Activated B cell treated with CpG ODN at 0.5 μM for 24 hours (primary cell): ENCODE measurements at regions of chr5 and their contacts with region 1.

Region 1: DNA sequence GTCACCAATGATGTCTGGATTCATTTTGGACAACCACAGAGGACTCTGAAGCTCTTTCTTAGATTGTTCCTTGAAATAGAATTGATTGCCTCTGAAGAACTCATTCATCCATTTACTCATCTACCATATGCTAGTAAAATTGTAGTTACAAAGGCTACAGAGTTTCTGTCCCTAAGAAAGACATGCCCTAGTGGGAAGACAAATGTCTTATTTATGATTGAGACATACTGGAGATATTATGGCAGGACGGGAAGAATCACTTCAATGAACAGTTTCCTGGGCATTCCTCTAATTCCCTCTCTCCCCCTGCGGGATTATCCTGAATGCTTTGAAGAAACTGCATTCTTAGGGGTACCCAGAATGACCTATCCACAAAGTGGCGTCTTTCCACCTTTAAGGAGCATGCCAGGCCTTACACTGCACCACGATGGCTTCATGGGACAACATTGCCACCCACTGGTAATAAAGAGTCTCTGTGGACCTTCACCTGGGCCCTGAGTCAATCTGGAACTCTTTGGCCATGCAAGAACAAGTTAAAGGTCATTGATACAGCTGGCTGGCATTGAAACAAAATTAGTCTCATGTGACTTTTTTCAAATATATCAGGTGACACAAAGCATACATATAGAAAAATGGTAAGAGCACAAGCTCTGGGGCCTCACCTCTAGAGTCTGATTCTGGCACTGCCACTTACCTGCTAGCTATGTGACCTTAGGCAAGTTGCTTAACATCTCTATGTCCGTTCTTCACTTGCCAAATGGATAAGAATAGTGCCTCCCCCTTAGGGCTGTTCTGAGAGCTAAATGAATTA is 32.1 kb downstream of the ANKRD55 start:
- DNase-seq: no peak
- ATAC-seq: peak; percentile 100
- H3K4me3 Mint-ChIP-seq: no peak overlapping the region
- H3K27ac Mint-ChIP-seq: no peak overlapping the region
- H3K4me1 Mint-ChIP-seq: peaks cover 4% of the 10 kb centered on the region
- H3K27me3 Mint-ChIP-seq: no peaks in the 10 kb centered on the region
- CTCF ChIP-seq: no peak

Region 2: DNA sequence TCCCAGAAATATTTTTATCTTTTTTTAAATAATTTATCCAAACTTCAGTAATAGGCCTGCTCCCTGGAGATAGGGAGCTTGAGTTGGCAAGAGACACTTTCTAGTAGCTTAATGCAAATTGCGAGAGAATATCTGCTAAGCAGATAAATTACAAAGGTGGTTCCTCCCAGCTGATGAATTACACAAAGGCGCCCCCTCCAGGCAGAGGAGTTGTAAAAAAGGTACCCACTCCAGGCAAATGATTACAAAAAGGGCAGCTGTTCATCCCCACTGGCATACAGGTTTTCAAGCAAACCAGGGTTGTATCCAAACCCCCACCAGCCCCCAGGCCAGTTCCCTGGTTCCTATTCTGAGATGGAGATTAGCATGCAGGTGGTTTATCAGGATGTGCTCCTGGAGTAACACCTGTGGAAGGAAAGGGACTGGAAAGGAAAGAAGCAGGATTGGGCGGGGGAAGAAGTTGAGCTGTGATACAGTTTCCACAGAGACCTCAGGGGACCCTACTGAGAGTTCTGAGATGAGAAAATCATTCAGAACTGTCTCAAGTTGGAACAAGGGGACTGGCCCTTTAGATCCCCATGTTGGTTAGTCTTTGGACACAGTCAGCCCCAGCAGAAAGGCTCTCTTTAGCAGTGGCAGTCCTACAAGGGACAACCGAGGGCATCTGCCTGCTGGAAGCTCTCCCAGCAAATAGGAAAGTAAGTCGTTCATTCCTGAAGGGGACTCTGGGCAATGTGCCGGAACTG is 1241.2 kb before region 1 on chr5:
- CTCF ChIA-PET with region 1: no interaction called
- POLR2A ChIA-PET with region 1: no interaction called
- intact Hi-C with region 1: no loop called
- DNase-seq: no peak
- ATAC-seq: no peak
- H3K4me3 Mint-ChIP-seq: no peak overlapping the region
- H3K27ac Mint-ChIP-seq: no peak overlapping the region
- H3K4me1 Mint-ChIP-seq: no peaks in the 10 kb centered on the region
- H3K27me3 Mint-ChIP-seq: peaks cover 28% of the 10 kb centered on the region
- CTCF ChIP-seq: no peak

Region 3: DNA sequence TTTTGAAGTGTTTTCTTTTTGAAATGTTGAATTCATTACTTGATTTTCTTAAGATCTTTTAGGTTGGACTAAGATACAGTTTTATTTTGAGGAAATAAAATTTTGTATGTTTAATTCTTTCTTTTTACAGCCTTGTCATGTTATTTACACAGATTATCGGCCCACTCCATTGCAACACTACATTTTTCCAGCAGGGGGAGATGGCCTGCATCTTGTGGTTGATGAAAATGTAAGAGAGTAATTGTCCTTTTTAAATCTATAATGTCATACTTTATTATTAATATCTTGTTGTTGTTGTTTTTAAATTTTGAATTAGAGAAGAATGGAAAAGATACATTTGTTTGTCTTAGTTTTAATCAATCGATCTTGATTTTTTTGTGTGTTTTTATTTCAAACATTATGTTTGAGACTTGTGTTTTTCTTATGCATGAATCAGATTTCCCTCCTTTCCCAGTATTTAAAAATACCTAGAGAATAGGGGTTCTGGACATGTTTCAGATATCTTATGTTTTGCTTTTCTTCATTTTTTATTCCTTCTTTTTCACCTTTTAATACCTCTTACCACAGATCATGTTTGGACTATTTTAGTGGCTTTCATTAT is 856.6 kb before region 1 on chr5:
- CTCF ChIA-PET with region 1: no interaction called
- POLR2A ChIA-PET with region 1: no interaction called
- intact Hi-C with region 1: loop called (anchors 5 kb)
- DNase-seq: no peak
- ATAC-seq: peak; percentile 52
- H3K4me3 Mint-ChIP-seq: no peak overlapping the region
- H3K27ac Mint-ChIP-seq: peak overlapping the region; percentile 41
- H3K4me1 Mint-ChIP-seq: peaks cover 3% of the 10 kb centered on the region
- H3K27me3 Mint-ChIP-seq: no peaks in the 10 kb centered on the region
- CTCF ChIP-seq: no peak

Region 4: GRCh38 chr5:55407059-55407684 is 793.9 kb before region 1 on chr5:
- CTCF ChIA-PET with region 1: interaction called, 3 read pairs
- POLR2A ChIA-PET with region 1: no interaction called
- intact Hi-C with region 1: loop called (anchors 1 kb)
- DNase-seq: no peak
- ATAC-seq: peak; percentile 37
- H3K4me3 Mint-ChIP-seq: no peak overlapping the region
- H3K27ac Mint-ChIP-seq: no peak overlapping the region
- H3K4me1 Mint-ChIP-seq: peaks cover 2% of the 10 kb centered on the region
- H3K27me3 Mint-ChIP-seq: no peaks in the 10 kb centered on the region
- CTCF ChIP-seq: no peak

Region 5: DNA sequence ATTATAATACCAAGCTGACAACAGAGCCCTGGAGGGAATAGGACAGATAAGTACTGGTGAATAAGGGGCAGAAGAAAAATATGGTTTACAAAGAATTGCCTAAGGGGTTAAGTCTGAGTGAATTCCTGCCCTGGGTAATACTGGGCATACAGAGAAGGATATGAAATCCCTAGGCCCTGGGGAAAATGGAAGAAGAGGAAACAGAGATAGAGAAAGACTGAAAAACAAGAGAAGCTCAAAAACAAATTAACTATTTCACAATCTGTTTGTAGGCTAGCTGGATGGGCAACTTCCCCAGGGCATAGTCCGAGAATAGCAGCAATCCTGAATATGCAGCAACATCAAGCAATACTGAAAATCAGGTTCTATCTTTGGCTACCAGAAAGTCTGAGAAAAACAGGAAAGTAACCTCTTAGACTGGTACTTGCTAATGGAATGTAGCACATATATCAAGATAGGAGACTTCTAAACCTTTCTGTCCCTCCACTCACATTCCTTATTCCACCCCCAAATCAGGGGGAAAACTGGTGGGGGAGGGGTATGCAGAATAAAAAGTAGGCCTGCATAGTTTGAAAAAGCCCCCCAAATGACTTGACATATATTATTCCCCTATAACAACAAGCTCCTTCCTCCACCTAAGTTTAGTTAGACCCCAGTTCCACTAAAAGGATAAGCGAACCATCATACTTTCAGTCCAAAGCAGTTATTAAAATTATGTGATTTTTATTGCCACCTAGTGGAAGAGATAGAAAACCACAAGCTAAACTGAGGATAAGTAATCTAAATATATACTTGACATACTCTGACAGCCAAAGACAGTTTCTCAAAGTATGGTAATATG is 509.6 kb before region 1 on chr5:
- CTCF ChIA-PET with region 1: no interaction called
- POLR2A ChIA-PET with region 1: no interaction called
- intact Hi-C with region 1: loop called (anchors 5 kb)
- DNase-seq: no peak
- ATAC-seq: peak; percentile 58
- H3K4me3 Mint-ChIP-seq: no peak overlapping the region
- H3K27ac Mint-ChIP-seq: no peak overlapping the region
- H3K4me1 Mint-ChIP-seq: peaks cover 5% of the 10 kb centered on the region
- H3K27me3 Mint-ChIP-seq: no peaks in the 10 kb centered on the region
- CTCF ChIP-seq: peak; percentile 26

Region 6: DNA sequence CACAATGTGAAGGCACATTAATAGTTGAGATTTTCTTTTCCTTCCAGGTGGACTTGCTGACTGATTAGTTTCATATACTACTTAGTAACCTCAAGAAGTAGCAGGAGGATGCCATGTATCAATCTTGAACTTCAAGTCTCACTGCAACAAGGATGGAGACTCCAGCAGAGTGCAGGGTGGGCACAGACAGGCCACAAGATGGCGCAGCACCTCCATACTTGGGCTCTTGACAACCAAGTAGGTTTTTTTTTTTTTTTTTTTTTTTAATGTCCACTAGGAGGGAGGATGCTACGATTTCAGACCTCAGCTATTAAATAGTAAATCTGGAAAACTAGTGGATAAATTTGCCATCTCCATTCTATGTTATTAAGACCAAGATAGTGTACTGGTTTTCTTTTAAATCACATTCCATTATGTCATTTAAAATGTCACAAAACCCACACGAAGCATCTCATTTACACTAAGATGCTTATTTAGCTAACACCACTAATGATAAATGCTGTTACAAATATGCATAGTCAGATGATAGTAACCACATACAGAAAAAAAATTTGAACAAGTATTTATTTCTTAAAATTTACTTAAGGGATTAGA is 264.9 kb before region 1 on chr5:
- CTCF ChIA-PET with region 1: interaction called, 76 read pairs
- POLR2A ChIA-PET with region 1: no interaction called
- intact Hi-C with region 1: loop called (anchors 1 kb)
- DNase-seq: peak; percentile 56
- ATAC-seq: peak; percentile 93
- H3K4me3 Mint-ChIP-seq: no peak overlapping the region
- H3K27ac Mint-ChIP-seq: no peak overlapping the region
- H3K4me1 Mint-ChIP-seq: no peaks in the 10 kb centered on the region
- H3K27me3 Mint-ChIP-seq: no peaks in the 10 kb centered on the region
- CTCF ChIP-seq: peak; percentile 48

Region 7: DNA sequence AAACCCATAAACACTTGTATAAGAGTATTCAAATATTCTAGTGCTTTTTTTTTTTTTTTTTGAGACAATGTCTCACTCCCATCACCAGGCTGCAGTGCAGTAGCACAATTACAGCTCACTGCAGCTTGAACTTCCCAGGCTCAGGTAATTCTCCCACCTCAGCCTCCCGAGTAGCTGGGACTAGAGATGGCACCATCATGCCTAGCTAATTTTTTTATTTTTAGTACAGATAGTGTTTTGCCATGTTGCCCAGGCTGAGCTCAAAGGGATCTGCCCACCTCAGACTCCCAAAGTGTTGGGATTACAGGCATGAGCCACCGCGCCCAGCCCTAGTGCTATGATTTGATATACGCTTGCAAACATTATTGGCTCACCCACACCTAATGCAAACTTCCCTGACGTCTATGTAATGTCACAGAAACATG is 218.1 kb before region 1 on chr5:
- CTCF ChIA-PET with region 1: interaction called, 8 read pairs
- POLR2A ChIA-PET with region 1: no interaction called
- intact Hi-C with region 1: loop called (anchors 1 kb)
- DNase-seq: no peak
- ATAC-seq: no peak
- H3K4me3 Mint-ChIP-seq: no peak overlapping the region
- H3K27ac Mint-ChIP-seq: no peak overlapping the region
- H3K4me1 Mint-ChIP-seq: no peaks in the 10 kb centered on the region
- H3K27me3 Mint-ChIP-seq: no peaks in the 10 kb centered on the region
- CTCF ChIP-seq: no peak